ENCODE measurements at regions of chr18 and their contacts with region 1.

Region 1: GRCh38 chr18:55322178-55322735 is 265.7 kb downstream of the TCF4 start:
- DNase-seq: peak; percentile 72 to 76
- ATAC-seq: peak; percentile 84

Region 2: DNA sequence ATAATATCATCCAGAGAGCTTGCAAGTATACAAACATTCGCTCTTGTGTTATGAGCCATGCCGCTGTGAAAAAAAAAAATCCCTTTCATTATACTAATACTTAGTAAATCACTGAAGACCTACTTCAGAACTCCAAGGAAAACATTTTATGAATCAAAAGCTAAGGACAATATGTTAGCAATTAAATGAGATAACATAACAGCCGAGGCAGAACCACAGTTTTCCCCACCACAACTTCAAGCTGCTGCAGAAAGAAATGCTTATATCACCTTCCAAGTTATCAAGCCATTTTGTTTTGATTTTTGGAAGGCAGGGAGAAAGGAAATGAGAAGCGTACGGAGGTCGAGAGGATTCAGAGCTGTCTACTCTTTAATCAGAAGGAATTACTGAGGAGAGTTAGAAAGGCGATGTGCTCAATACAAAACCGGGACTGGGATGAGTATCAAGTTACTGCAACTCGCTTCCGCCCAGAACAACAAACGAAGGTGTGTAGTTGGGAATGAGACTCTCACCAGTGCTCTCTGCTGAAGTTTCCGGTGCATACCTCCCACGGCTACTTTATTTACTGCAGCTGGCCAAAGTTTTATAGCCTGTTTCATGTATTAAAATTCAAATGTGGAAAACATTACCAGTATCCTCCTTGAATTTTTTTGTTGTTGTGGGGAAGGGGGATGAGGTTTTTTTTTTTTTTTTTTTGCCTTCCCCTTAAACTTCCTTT is 70.8 kb before region 1 on chr18:
- intact Hi-C with region 1: loop called in 1 of 2 experiments (anchors 10 kb)
- DNase-seq: no peak
- ATAC-seq: peak; percentile 62

Region 3: DNA sequence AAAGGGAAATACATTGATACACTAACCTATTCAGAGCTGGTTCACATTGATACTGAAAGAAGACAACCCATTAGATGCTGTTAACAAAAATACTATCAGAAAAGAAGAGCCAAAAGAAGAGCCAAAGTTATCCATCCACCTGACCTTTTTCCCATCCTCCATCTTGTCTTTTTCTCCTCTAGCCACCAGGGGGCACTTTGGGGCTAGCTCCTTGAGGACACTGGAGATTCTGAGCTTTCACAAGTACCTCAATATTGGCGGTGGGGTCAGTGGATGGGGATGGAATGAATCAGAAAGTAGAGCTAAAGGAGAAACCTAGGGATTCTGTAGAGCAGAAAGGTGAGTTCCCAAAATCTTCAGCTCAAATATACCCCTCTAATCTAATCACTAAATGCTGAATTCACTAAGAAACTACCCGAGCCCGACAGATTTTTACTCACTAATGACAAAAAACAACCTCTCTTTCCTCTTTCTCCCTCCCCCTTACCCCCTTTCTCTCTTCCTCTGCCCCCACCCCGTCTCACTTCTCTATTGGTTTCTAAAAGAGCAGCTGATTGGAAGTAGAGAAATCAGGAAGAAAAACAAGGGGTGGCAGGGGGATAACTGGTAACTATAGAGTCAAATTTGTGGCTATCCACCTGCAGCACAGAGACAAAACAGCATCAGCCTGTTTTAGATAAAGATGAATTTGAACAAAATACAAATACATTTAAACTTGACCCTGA is 62.5 kb after region 1 on chr18:
- intact Hi-C with region 1: no loop called
- DNase-seq: no peak
- ATAC-seq: no peak

Region 4: DNA sequence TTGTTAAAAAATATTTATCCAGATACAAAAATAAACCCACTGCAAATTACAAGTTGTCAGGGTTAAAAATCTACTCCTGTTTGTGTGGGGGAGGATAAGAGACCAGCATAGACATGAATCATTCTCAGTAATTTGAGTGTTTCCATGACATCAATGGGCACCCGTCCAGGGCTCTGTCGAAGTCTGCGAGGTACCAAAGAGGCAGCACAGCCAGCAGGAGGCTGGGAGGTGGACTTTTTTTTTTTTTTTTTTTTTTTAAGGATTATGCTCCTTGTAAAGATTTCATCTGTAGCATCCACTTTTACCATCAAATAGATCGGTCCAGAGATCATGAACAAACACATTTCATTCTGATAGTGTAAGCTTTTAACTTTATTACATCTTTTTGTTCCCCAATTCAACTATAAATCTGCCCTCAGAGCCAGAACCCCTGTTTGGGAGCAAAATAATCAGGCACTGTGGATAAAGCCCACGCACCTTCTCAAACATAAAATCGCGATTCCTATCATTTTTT is 83.7 kb after region 1 on chr18:
- intact Hi-C with region 1: loop called in 1 of 2 experiments (anchors 5 kb)
- DNase-seq: peak; percentile 37 to 43
- ATAC-seq: no peak

Region 5: GRCh38 chr18:55589625-55590291 is 267.5 kb after region 1 on chr18:
- intact Hi-C with region 1: loop called in 1 of 2 experiments (anchors 10 kb)
- DNase-seq: peak; percentile 92 to 94
- ATAC-seq: peak; percentile 98

Measured in left colon (tissue), 2 donors.